ENCODE measurements at regions of chr7 and their contacts with region 1.

Region 1: GRCh38 chr7:143126140-143126539 is 5.7 kb upstream of the PIP start:
- H3K4me3 Mint-ChIP-seq: no peak overlapping the region
- H3K27ac Mint-ChIP-seq: peak overlapping the region; percentile 81
- H3K4me1 Mint-ChIP-seq: peaks cover 62% of the 10 kb centered on the region
- H3K27me3 Mint-ChIP-seq: no peaks in the 10 kb centered on the region

Region 2: DNA sequence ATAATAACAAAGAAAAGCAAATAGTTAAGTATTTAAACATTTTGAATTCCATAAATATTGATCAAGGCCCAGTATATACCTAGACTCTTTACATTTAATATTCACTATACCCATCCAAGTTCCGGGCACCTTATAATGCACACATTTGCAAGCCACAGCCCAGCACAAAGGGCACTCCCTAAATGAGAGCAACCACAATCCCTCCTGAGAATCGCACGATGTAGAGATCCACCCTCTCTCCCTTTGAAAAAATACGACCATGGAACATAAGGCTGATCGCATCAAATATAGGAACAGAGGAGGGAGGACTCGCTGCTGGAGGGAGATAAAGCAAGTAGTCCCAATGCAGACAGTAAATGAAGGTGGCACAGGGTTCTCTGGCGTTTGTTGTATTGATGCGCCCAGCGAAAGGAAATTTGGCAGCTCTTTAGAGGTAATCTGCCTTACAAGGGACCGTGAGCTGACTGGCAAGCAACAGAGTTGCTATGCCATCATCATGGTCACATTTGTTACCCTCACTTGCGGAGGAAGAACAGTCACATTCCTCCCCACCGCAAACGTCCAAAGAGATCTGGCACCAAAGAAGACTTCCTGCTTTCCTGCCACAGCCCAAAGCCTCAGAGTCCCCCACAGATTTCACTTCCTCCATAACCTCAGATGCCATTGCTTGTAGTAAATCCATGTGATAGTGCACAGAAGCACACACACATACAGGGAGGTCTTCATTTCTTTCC is 79.6 kb after region 1 on chr7:
- intact Hi-C with region 1: loop called (anchors 2 kb)
- H3K4me3 Mint-ChIP-seq: peak overlapping the region; percentile 2
- H3K27ac Mint-ChIP-seq: peak overlapping the region; percentile 85
- H3K4me1 Mint-ChIP-seq: peaks cover 56% of the 10 kb centered on the region
- H3K27me3 Mint-ChIP-seq: peaks cover 8% of the 10 kb centered on the region

Measured in dendritic cell treated with granulocyte-macrophage colony-stimulating factor and Interleukin-4, amounts not matched to agents 40 ng/mL and 50 ng/mL, for 4 days (primary cell).